AG04450 (cell line): ENCODE measurements at regions of chr5 and their contacts with region 1.

Region 1: DNA sequence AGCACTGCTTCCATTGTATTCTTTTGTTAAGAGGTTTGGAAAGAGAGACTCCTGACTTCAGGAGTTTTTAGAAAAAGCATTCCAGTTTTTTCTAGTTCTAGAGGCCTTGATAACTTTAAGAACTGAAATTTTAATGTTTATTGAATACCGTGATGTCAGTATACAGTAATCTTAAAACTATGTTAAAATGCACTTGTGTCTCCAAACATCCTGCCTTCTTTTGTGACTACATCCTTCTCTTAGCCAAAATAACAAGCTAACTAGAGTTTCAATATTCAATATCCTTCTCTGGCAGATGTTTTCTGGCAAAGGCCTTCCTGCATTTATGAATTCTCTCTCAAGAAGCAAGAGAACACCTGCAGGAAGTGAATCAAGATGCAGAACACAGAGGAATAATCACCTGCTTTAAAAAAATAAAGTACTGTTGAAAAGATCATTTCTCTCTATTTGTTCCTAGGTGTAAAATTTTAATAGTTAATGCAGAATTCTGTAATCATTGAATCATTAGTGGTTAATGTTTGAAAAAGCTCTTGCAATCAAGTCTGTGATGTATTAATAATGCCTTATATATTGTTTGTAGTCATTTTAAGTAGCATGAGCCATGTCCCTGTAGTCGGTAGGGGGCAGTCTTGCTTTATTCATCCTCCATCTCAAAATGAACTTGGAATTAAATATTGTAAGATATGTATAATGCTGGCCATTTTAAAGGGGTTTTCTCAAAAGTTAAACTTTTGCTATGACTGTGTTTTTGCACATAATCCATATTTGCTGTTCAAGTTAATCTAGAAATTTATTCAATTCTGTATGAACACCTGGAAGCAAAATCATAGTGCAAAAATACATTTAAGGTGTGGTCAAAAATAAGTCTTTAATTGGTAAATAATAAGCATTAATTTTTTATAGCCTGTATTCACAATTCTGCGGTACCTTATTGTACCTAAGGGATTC is 43.1 kb downstream of the NDFIP1 start:
- DNase-seq: peak; percentile 74
- H3K4me3 ChIP-seq: no peak overlapping the region
- H3K27ac ChIP-seq: peak overlapping the region; percentile 47
- H3K27me3 ChIP-seq: no peaks in the 10 kb centered on the region
- CTCF ChIP-seq: peak; percentile 85

Region 2: GRCh38 chr5:142356716-142357473 is 205.2 kb after region 1 on chr5:
- CTCF ChIA-PET with region 1: interaction called, 10 read pairs
- POLR2A ChIA-PET with region 1: no interaction called
- DNase-seq: peak; percentile 83
- H3K4me3 ChIP-seq: peak overlapping the region; percentile 63
- H3K27ac ChIP-seq: peak overlapping the region; percentile 95
- H3K27me3 ChIP-seq: no peaks in the 10 kb centered on the region
- CTCF ChIP-seq: no peak

Region 3: GRCh38 chr5:142542906-142543305 is 391.2 kb after region 1 on chr5:
- CTCF ChIA-PET with region 1: interaction called, 91 read pairs
- POLR2A ChIA-PET with region 1: no interaction called
- DNase-seq: no peak
- H3K4me3 ChIP-seq: no peak overlapping the region
- H3K27ac ChIP-seq: no peak overlapping the region
- H3K27me3 ChIP-seq: no peaks in the 10 kb centered on the region
- CTCF ChIP-seq: peak; percentile 23; the same call in 1 of the 2 replicates

Region 4: GRCh38 chr5:142587354-142587965 is 435.8 kb after region 1 on chr5:
- CTCF ChIA-PET with region 1: interaction called, 11 read pairs
- POLR2A ChIA-PET with region 1: no interaction called
- DNase-seq: peak; percentile 20
- H3K4me3 ChIP-seq: no peak overlapping the region
- H3K27ac ChIP-seq: no peak overlapping the region
- H3K27me3 ChIP-seq: no peaks in the 10 kb centered on the region
- CTCF ChIP-seq: peak; percentile 68